ENCODE measurements at regions of chr19 and their contacts with region 1.

Region 1: GRCh38 chr19:50777754-50778303 is 7.6 kb downstream of the GPR32 start:
- DNase-seq: no peak
- ATAC-seq: no peak
- H3K4me3 ChIP-seq: no peak overlapping the region
- H3K27ac ChIP-seq: no peak overlapping the region
- H3K4me1 ChIP-seq: no peaks in the 10 kb centered on the region
- H3K27me3 ChIP-seq: peaks cover 0 to 78% (median 25%) of the 10 kb centered on the region in 3 donors
- CTCF ChIP-seq: no peak

Region 2: GRCh38 chr19:50357178-50358100 is 420.4 kb before region 1 on chr19:
- intact Hi-C with region 1: loop called in 1 of 2 experiments (anchors 1 kb)
- DNase-seq: peak; percentile 73 to 84
- ATAC-seq: peak; percentile 74 to 89 (median 86)
- H3K4me3 ChIP-seq: peak overlapping the region; percentile 65
- H3K27ac ChIP-seq: peak overlapping the region; percentile 67
- H3K4me1 ChIP-seq: peaks cover 7% of the 10 kb centered on the region
- H3K27me3 ChIP-seq: no peaks in the 10 kb centered on the region
- CTCF ChIP-seq: peak; percentile 84

Region 3: GRCh38 chr19:50368649-50369570 is 408.9 kb before region 1 on chr19:
- intact Hi-C with region 1: loop called in 1 of 2 experiments (anchors 5 kb)
- DNase-seq: peak; percentile 81 to 86
- ATAC-seq: peak; percentile 89 to 97 (median 94)
- H3K4me3 ChIP-seq: peak overlapping the region; percentile 79
- H3K27ac ChIP-seq: peak overlapping the region; percentile 39
- H3K4me1 ChIP-seq: peaks cover 8% of the 10 kb centered on the region
- H3K27me3 ChIP-seq: no peaks in the 10 kb centered on the region
- CTCF ChIP-seq: peak; percentile 86

Region 4: DNA sequence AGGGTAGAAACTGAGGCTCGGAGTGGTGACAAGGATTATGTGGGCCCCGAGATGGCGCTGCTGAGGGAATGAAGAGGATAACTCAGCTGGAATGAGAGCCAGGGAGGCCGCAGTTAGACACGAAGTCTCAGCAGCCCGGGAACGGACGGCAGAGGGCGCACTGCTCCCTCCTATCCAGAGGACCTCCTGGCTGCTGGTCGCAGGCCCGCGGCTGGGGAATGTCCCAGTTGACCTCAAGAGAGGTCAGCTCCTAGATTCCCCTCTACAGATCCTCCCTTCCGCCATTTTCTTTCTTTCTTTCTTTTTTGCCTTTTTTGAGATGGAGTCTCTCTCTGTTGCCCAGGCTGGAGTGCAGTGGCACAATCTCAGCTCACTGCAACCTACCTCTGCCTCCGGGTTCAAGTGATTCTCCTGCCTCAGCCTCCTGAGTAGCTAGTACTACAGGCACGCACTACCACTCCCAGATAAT is 240.0 kb before region 1 on chr19:
- intact Hi-C with region 1: loop called (anchors 5 to 10 kb)
- DNase-seq: peak; percentile 74 to 81
- ATAC-seq: peak; percentile 60 to 93 (median 84)
- H3K4me3 ChIP-seq: no peak overlapping the region
- H3K27ac ChIP-seq: no peak overlapping the region
- H3K4me1 ChIP-seq: no peaks in the 10 kb centered on the region
- H3K27me3 ChIP-seq: peaks cover 0 to 12% (median 0%) of the 10 kb centered on the region in 3 donors
- CTCF ChIP-seq: peak; percentile 69

Region 5: GRCh38 chr19:50547385-50548190 is 230.2 kb before region 1 on chr19:
- intact Hi-C with region 1: loop called in 1 of 2 experiments (anchors 10 kb)
- DNase-seq: no peak
- ATAC-seq: peak in 1 of 4 donors; percentile 38
- H3K4me3 ChIP-seq: no peak overlapping the region
- H3K27ac ChIP-seq: no peak overlapping the region
- H3K4me1 ChIP-seq: no peaks in the 10 kb centered on the region
- H3K27me3 ChIP-seq: peaks cover 0 to 21% (median 12%) of the 10 kb centered on the region in 3 donors
- CTCF ChIP-seq: peak; percentile 14

Region 6: GRCh38 chr19:50703918-50704548 is 73.8 kb before region 1 on chr19:
- intact Hi-C with region 1: loop called in 1 of 2 experiments (anchors 5 kb)
- DNase-seq: peak in 1 of 2 donors; percentile 30
- ATAC-seq: no peak
- H3K4me3 ChIP-seq: no peak overlapping the region
- H3K27ac ChIP-seq: no peak overlapping the region
- H3K4me1 ChIP-seq: no peaks in the 10 kb centered on the region
- H3K27me3 ChIP-seq: peaks cover 0 to 21% (median 6%) of the 10 kb centered on the region in 3 donors
- CTCF ChIP-seq: no peak

Region 7: GRCh38 chr19:50739914-50740426 is 37.9 kb before region 1 on chr19:
- intact Hi-C with region 1: no loop called
- DNase-seq: no peak
- ATAC-seq: no peak
- H3K4me3 ChIP-seq: no peak overlapping the region
- H3K27ac ChIP-seq: no peak overlapping the region
- H3K4me1 ChIP-seq: no peaks in the 10 kb centered on the region
- H3K27me3 ChIP-seq: peaks cover 1 to 33% (median 8%) of the 10 kb centered on the region in 3 donors
- CTCF ChIP-seq: no peak

Measured in psoas muscle (tissue), 8 donors.